ENCODE measurements at regions of chr4 and their contacts with region 1.

Region 1: DNA sequence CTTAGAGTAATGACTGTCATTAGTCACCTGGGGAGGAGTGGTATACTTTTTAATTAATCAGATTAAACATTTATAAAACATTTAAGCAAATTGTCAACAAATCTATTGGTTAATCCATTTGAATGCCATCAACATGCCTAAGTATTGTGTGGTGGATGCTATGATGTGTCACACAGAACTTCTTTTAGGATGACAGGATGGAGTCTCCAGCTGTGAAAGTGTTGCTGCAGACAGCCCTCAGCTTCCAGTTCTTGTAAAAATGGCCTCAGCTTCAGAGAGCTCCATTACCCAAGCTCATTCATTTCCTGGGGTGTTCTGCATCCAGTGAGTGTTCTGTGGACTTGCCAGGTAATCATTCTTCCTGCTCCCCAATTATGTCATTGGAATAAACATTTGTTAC is 74.3 kb upstream of the CLNK start:
- DNase-seq: no peak
- H3K4me3 ChIP-seq: no peak overlapping the region
- CTCF ChIP-seq: no peak

Region 2: DNA sequence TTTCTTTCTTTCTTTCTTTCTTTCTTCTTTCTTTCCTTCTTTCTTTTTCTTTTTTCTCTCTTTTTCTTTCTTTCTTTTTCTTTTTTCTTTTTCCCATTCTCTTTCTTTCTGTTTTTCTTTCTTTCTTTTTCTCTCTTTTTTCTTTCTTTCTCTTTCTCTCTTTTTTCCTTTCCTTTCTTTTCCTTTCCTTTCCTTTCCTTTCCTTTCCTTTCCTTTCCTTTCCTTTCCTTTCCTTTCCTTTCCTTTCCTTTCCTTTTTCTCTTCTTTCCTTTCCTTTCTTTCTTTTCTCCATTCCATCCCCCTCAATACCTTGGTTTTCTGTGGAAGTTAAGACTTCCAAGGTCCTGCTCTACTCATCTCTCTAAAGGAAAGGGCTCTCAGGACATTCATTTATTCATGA is 28.5 kb after region 1 on chr4:
- in situ Hi-C with region 1: loop called (anchors 5 kb)
- DNase-seq: no peak
- H3K4me3 ChIP-seq: no peak overlapping the region
- CTCF ChIP-seq: no peak

Region 3: DNA sequence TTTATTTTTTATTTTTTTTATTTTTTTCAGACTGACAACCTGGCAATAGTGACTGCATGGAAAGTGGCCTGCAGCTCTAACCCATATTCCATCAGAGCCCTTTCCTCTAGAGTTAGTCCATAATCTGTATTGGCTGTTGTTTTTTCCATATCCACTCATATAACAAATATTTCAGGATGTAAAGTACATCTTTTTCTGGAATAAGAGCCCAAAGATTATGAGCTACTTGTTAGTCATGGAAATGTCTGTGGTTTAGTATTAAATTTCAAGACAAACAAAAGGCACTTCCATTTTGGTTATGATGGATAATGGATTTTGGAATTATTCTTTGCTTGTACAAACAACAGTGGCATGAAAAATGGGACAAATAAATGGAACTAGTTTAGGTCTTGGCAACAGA is 965.8 kb after region 1 on chr4:
- in situ Hi-C with region 1: loop called (anchors 5 kb)
- DNase-seq: peak; percentile 45
- H3K4me3 ChIP-seq: no peak overlapping the region
- CTCF ChIP-seq: no peak